PC-3 (cell line): ENCODE measurements at regions of chr4 and their contacts with region 1.

Region 1: GRCh38 chr4:71406459-71406963 is 67.7 kb downstream of the SLC4A4 start:
- DNase-seq: peak; percentile 56
- ATAC-seq: peak; percentile 70
- H3K4me3 ChIP-seq: no peak overlapping the region
- H3K27ac ChIP-seq: no peak overlapping the region
- H3K4me1 ChIP-seq: peaks cover 8% of the 10 kb centered on the region
- H3K27me3 ChIP-seq: no peaks in the 10 kb centered on the region
- CTCF ChIP-seq: no peak

Region 2: DNA sequence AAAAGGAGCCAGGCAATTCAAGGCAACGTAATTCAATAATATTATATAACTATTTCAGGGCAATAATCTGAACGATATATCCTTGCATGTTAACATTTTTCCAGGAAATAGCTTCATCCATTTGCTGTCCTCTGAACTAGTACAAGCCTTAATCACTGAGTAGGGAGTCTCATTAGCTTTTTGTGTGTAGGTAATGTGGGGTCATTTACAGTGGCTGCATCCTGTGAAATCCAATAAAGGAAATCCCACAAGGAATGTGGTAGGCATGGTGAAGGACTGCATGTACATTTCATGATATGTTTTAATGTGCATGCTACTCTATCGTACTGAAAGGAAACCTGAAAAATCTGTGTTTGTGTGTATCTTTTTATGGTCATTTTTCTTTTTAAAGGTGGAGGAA is 35.8 kb after region 1 on chr4:
- CTCF ChIA-PET with region 1: no interaction called
- POLR2A ChIA-PET with region 1: interaction called, 16 read pairs
- intact Hi-C with region 1: no loop called
- DNase-seq: no peak
- ATAC-seq: no peak
- H3K4me3 ChIP-seq: no peak overlapping the region
- H3K27ac ChIP-seq: no peak overlapping the region
- H3K4me1 ChIP-seq: peaks cover 5% of the 10 kb centered on the region; the same call in 1 of the 2 replicates
- H3K27me3 ChIP-seq: no peaks in the 10 kb centered on the region
- CTCF ChIP-seq: no peak

Region 3: GRCh38 chr4:71487344-71487920 is 80.9 kb after region 1 on chr4:
- CTCF ChIA-PET with region 1: no interaction called
- POLR2A ChIA-PET with region 1: interaction called, 15 read pairs
- intact Hi-C with region 1: no loop called
- DNase-seq: no peak
- ATAC-seq: no peak
- H3K4me3 ChIP-seq: no peak overlapping the region
- H3K27ac ChIP-seq: no peak overlapping the region
- H3K4me1 ChIP-seq: no peaks in the 10 kb centered on the region
- H3K27me3 ChIP-seq: no peaks in the 10 kb centered on the region
- CTCF ChIP-seq: no peak